ENCODE measurements at regions of chr20 and their contacts with region 1.

Region 1: DNA sequence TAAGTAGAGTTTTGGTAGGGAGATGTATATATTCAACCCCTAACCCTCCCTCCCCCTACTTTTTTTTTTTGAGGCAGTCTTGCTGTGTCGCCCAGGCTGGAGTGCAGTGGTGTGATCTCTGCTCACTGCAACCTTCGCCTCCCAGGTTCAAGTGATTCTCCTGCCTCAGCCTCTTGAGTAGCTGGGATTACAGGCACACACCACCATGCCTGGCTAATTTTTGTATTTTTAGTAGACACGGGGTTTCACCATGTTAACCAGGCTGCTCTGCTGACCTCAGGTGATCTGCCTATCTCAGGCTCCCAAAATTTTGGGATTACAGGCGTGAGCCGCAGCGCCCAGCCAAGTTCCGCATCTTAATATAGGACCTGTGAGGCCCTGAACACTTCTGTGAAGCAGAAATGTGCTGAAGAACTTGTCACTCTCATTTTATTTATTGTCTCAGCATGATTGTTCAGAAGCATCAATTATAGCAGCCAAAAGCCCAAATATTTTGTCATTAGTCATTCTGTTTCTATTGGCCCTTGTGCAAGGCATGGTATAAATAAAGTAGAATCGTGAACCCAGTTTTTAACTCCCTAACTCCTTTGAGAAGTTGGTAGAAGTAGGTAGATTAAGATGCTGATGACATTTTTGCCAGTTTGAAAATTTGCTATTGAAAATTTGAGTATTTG is 19.4 kb downstream of the DSTN start:
- DNase-seq: no peak
- ATAC-seq: no peak
- H3K4me3 ChIP-seq: no peak overlapping the region
- H3K27ac ChIP-seq: no peak overlapping the region
- H3K4me1 ChIP-seq: no peaks in the 10 kb centered on the region
- H3K27me3 ChIP-seq: no peaks in the 10 kb centered on the region
- CTCF ChIP-seq: no peak
- EP300 ChIP-seq: no peak
- POLR2A ChIP-seq: no peak
- RAD21 ChIP-seq: no peak

Region 2: DNA sequence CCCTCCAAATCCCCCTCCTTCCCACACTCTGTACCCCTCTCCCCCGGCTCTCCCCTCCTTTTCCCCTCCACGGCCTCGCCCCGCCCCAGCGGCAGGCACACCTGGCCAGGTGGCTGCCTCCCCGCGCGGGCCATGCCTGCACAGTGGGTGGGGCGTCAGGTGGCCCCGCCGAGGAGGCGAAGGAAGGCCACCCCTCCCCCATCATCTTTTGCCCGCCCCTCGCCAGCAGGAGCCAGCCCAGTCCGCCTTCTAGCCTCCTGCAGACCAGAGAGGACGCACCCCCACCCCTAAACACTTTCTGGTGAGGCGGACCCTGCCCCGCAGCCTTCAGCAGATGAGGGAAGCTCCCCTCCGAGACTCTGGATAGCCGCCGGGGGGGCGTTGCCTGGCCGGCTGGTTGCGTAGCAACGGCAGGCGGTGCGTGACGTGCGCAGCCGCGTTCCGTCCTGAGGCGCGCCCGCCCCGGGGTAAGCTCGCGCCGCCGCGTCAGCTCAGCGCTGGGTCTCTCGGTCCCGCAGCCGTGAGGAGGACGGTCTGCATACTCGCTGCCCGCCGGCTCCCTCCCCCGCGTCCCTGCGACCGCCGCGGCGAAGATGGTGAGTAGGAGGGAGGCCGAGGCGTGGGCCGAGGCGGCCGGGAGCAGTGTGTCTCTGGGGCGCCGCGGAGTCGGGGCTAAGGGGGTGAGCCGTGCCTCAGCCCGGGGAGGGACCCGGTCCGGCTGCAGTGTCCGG is 19.5 kb before region 1 on chr20 and contains the start of gene DSTN:
- CTCF ChIA-PET with region 1: interaction called, 10 read pairs
- POLR2A ChIA-PET with region 1: no interaction called
- RAD21 ChIA-PET with region 1: interaction called, 4 read pairs
- SMC1A ChIA-PET with region 1: interaction called, 5 read pairs
- in situ Hi-C with region 1: no loop called
- intact Hi-C with region 1: no loop called
- DNase-seq: peak; percentile 38
- ATAC-seq: peak; percentile 94
- H3K4me3 ChIP-seq: peak within 1 kb of the TSS; percentile 98
- H3K27ac ChIP-seq: peak within 1 kb of the TSS; percentile 45
- H3K4me1 ChIP-seq: peaks cover 4% of the 10 kb centered on the region
- H3K27me3 ChIP-seq: no peaks in the 10 kb centered on the region
- CTCF ChIP-seq: no peak
- EP300 ChIP-seq: no peak
- POLR2A ChIP-seq: peak; percentile 88
- RAD21 ChIP-seq: no peak
- polyA plus RNA-seq, gene DSTN: 34.8 to 46.6 TPM